GM12878 (cell line): ENCODE measurements at regions of chr2 and their contacts with region 1.

Region 1: GRCh38 chr2:86035883-86036668 is 69.6 kb downstream of the POLR1A start:
- DNase-seq: peak; percentile 71
- ATAC-seq: peak; percentile 92
- H3K4me3 ChIP-seq: peak overlapping the region; percentile 49; the same call in 1 of the 2 replicates
- H3K27ac ChIP-seq: peak overlapping the region; percentile 76
- H3K4me1 ChIP-seq: peaks cover 37% of the 10 kb centered on the region
- H3K27me3 ChIP-seq: no peaks in the 10 kb centered on the region
- CTCF ChIP-seq: peak; percentile 39 to 56 (median 49); a peak in 5 of 6 replicates
- EP300 ChIP-seq: peak; percentile 51 to 70
- POLR2A ChIP-seq: no peak; the same call in 1 of the 2 replicates
- RAD21 ChIP-seq: peak; percentile 66; the same call in 1 of the 2 replicates

Region 2: GRCh38 chr2:85858841-85859240 is 177.2 kb before region 1 on chr2:
- CTCF ChIA-PET with region 1: interaction called, 17 read pairs
- POLR2A ChIA-PET with region 1: interaction called, 3 read pairs
- RAD21 ChIA-PET with region 1: interaction called, 14 read pairs
- SMC1A ChIA-PET with region 1: interaction called, 22 read pairs
- in situ Hi-C with region 1: no loop called
- intact Hi-C with region 1: no loop called
- DNase-seq: no peak
- ATAC-seq: no peak
- H3K4me3 ChIP-seq: no peak overlapping the region
- H3K27ac ChIP-seq: no peak overlapping the region
- H3K4me1 ChIP-seq: peaks cover 22% of the 10 kb centered on the region
- H3K27me3 ChIP-seq: peaks cover 0 to 3% of the 10 kb centered on the region in 2 experiments; a peak in 1 of 4 replicates
- CTCF ChIP-seq: no peak
- EP300 ChIP-seq: no peak
- POLR2A ChIP-seq: no peak
- RAD21 ChIP-seq: no peak

Region 3: GRCh38 chr2:85920810-85921545 is 115.1 kb before region 1 on chr2:
- CTCF ChIA-PET with region 1: interaction called, 7 read pairs
- POLR2A ChIA-PET with region 1: interaction called, 4 read pairs
- RAD21 ChIA-PET with region 1: interaction called, 11 read pairs
- SMC1A ChIA-PET with region 1: interaction called, 6 read pairs
- in situ Hi-C with region 1: no loop called
- intact Hi-C with region 1: no loop called
- DNase-seq: no peak
- ATAC-seq: no peak
- H3K4me3 ChIP-seq: no peak overlapping the region
- H3K27ac ChIP-seq: no peak overlapping the region
- H3K4me1 ChIP-seq: peaks cover 9% of the 10 kb centered on the region
- H3K27me3 ChIP-seq: no peaks in the 10 kb centered on the region
- CTCF ChIP-seq: no peak
- EP300 ChIP-seq: no peak
- POLR2A ChIP-seq: no peak
- RAD21 ChIP-seq: no peak

Region 4: DNA sequence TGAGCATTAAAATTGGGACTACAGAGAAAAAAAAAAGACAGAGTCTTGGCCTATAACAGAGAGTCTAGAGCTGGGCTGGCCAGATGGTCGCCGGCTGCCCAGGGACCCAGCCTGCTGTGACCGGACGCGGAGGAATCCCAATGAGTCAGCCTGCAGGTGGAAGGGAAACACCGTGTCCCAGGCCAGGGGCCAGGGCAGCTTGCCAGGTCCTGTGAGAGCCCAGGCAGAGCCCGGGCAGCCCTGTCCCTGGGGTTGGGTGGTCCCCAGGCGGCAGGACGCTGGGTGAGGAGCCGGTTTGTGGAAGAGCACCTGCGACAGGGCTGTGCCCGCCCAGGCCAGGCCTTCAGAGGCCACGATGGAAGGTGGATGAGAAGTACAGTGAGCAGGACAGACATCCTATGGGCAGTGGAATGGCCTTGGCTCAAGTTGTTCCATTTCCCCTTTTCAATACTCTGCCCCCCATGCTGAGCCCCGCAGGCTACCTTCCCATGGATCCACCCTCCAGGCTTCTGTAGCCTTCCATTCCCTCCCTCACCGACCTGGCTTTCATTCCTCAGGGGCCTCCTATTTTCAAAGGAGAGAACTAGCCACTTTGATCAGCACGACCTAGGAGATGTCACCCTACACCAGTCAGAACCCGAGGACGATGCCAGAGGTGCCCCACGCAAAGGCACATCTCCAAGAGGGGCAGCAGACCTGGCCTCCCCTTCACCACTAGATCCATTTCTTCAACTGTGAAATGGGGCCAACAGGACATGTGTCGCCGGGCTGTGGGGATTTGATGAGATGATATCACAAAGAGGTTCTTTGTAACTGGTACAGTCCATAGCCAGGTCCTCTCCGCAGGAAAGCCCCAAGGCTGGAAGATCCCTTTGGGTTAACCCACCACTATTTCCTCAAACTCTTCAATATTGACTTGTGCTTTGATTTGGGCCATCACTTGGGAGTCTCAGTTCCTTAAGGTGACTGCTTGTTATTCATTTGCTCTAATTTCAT is 17.9 kb before region 1 on chr2:
- CTCF ChIA-PET with region 1: interaction called, 39 read pairs
- POLR2A ChIA-PET with region 1: interaction called, 23 read pairs
- RAD21 ChIA-PET with region 1: interaction called, 58 read pairs
- SMC1A ChIA-PET with region 1: interaction called, 46 read pairs
- in situ Hi-C with region 1: no loop called
- intact Hi-C with region 1: no loop called
- DNase-seq: no peak
- ATAC-seq: peak; percentile 71
- H3K4me3 ChIP-seq: no peak overlapping the region
- H3K27ac ChIP-seq: peak overlapping the region; percentile 60
- H3K4me1 ChIP-seq: peaks cover 20% of the 10 kb centered on the region
- H3K27me3 ChIP-seq: no peaks in the 10 kb centered on the region
- CTCF ChIP-seq: no peak
- EP300 ChIP-seq: peak; percentile 22 to 68; a peak in 1 of 4 replicates
- POLR2A ChIP-seq: no peak
- RAD21 ChIP-seq: no peak